ENCODE measurements at regions of chr7 and their contacts with region 1.

Region 1: DNA sequence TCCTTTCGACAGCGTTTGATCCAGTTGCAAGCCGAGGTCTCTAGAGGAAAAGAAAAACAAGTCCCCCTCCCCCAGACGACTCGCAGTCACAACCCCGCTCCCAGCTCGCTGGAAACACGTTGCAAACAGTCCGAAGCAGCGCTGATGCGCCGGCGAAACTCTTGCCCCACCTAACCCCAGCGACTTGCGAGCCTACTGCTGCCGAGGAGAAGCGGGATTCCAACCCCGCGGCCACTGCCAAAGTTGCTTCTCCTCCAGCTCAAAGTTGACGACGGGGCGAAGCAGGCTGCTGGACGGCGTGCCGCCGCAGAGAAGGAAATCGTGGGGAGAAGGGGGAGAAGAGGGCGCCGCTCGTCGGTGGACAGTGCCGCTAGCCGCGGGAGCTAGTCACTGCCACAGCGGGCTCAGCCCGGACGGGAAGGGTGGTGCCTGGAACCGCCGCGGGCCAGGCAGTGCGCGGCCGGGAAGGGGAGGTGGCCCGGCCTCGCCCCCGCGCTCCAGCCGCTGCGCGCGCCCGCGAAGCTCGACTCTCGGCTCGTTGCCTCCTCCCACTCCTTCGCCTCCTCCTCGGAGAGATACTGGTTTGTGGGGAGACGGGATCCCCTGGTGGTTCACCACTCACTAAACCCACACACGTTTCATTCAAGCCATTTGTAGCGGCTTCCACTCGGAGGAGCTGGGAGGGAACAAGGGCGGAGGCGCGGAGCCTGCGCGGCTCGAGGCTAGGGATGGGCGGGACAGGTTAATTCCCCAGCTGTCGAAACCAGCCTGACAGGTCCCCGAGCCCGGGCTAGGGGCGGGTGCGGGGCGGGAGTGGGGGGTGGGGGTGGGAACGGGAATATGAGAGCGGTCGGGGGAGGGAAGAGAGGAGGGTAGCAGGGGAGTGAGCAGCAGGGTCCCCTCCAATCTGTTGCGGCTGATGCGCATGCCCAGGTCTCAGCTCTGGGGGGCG is at the start of gene GPR37:
- DNase-seq: peak; percentile 83
- H3K4me3 ChIP-seq: peak within 1 kb of the TSS; percentile 53 to 74 (median 65)
- H3K27ac ChIP-seq: no peak within 1 kb of the TSS
- H3K4me1 ChIP-seq: peaks cover 16% of the 10 kb centered on the region
- H3K27me3 ChIP-seq: no peaks in the 10 kb centered on the region
- CTCF ChIP-seq: peak; percentile 9 to 61
- total RNA-seq, gene GPR37: 0.85 to 1.2 TPM

Region 2: GRCh38 chr7:124171068-124171467 is 594.6 kb before region 1 on chr7:
- CTCF ChIA-PET with region 1: no interaction called
- dilution Hi-C with region 1: no loop called
- in situ Hi-C with region 1: no loop called
- intact Hi-C with region 1: loop called (anchors 1 kb)
- DNase-seq: peak; percentile 6
- H3K4me3 ChIP-seq: no peak overlapping the region
- H3K27ac ChIP-seq: no peak overlapping the region
- H3K4me1 ChIP-seq: no peaks in the 10 kb centered on the region
- H3K27me3 ChIP-seq: no peaks in the 10 kb centered on the region
- CTCF ChIP-seq: peak; percentile 42 to 69

Region 3: GRCh38 chr7:124276019-124276622 is 489.6 kb before region 1 on chr7:
- CTCF ChIA-PET with region 1: no interaction called
- dilution Hi-C with region 1: no loop called
- in situ Hi-C with region 1: no loop called
- intact Hi-C with region 1: loop called (anchors 5 kb)
- DNase-seq: peak; percentile 14
- H3K4me3 ChIP-seq: no peak overlapping the region
- H3K27ac ChIP-seq: no peak overlapping the region
- H3K4me1 ChIP-seq: no peaks in the 10 kb centered on the region
- H3K27me3 ChIP-seq: peaks cover 1% of the 10 kb centered on the region
- CTCF ChIP-seq: peak; percentile 63 to 69

Region 4: GRCh38 chr7:124351950-124352349 is 413.7 kb before region 1 on chr7:
- CTCF ChIA-PET with region 1: no interaction called
- dilution Hi-C with region 1: no loop called
- in situ Hi-C with region 1: no loop called
- intact Hi-C with region 1: no loop called
- DNase-seq: no peak
- H3K4me3 ChIP-seq: no peak overlapping the region
- H3K27ac ChIP-seq: no peak overlapping the region
- H3K4me1 ChIP-seq: no peaks in the 10 kb centered on the region
- H3K27me3 ChIP-seq: no peaks in the 10 kb centered on the region
- CTCF ChIP-seq: no peak

Region 5: DNA sequence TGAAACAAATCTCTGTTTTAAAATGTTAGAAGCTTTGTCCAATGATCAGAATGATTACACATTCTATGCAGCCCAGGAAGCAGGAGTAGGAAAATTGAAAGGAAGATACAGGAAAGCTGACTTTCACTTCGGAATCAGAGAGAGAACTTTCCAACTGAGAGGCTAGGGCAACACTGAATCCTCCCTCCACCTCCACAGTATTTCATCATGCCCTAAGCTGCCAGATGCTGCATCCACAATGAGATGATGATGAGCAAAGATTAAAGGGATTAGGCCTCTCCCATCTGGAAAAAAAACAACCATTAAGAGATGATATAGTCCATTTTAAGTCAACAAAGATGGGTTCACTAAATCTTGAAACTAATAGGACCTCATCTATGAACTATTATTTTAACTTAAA is 215.6 kb before region 1 on chr7:
- CTCF ChIA-PET with region 1: no interaction called
- dilution Hi-C with region 1: no loop called
- in situ Hi-C with region 1: no loop called
- intact Hi-C with region 1: loop called (anchors 10 kb)
- DNase-seq: no peak
- H3K4me3 ChIP-seq: no peak overlapping the region
- H3K27ac ChIP-seq: no peak overlapping the region
- H3K4me1 ChIP-seq: no peaks in the 10 kb centered on the region
- H3K27me3 ChIP-seq: no peaks in the 10 kb centered on the region
- CTCF ChIP-seq: no peak

Region 6: GRCh38 chr7:124667312-124668153 is 98.1 kb before region 1 on chr7:
- CTCF ChIA-PET with region 1: no interaction called
- dilution Hi-C with region 1: no loop called
- in situ Hi-C with region 1: no loop called
- intact Hi-C with region 1: loop called (anchors 10 kb)
- DNase-seq: no peak
- H3K4me3 ChIP-seq: no peak overlapping the region
- H3K27ac ChIP-seq: no peak overlapping the region
- H3K4me1 ChIP-seq: peaks cover 19% of the 10 kb centered on the region
- H3K27me3 ChIP-seq: no peaks in the 10 kb centered on the region
- CTCF ChIP-seq: no peak

Region 7: DNA sequence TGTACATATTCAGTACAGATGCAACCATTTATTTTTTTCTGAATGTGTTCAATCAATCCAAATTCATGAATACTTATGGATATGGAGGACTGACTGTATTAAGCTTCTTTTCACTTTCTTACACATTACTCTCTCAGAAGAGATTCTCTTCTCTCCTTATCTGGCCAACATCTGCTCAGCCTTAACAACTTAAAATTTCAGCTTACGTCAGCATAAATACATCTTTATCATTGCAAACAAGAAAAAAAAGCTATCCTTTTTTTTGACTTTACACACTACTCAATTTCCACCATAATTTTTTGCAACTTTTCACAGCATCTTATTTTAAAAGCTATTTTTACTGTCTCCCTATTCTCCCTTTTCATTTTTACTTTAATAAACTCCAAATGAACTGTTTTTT is 244.9 kb after region 1 on chr7:
- CTCF ChIA-PET with region 1: no interaction called
- dilution Hi-C with region 1: no loop called
- in situ Hi-C with region 1: no loop called
- intact Hi-C with region 1: no loop called
- DNase-seq: no peak
- H3K4me3 ChIP-seq: no peak overlapping the region
- H3K27ac ChIP-seq: no peak overlapping the region
- H3K4me1 ChIP-seq: no peaks in the 10 kb centered on the region
- H3K27me3 ChIP-seq: no peaks in the 10 kb centered on the region
- CTCF ChIP-seq: no peak

Measured in mammary epithelial cell (primary cell).